ENCODE measurements at regions of chr2 and their contacts with region 1.

Region 1: GRCh38 chr2:143296089-143296488 is 166.9 kb downstream of the ARHGAP15 start:
- DNase-seq: no peak
- ATAC-seq: no peak
- H3K4me3 ChIP-seq: no peak overlapping the region
- H3K4me3 Mint-ChIP-seq: no peak overlapping the region
- H3K27ac ChIP-seq: no peak overlapping the region
- H3K27ac Mint-ChIP-seq: peak overlapping the region in 1 of 9 donors; percentile 67
- H3K4me1 ChIP-seq: no peaks in the 10 kb centered on the region
- H3K4me1 Mint-ChIP-seq: peaks cover 15 to 54% (median 45%) of the 10 kb centered on the region in 7 donors
- H3K27me3 ChIP-seq: no peaks in the 10 kb centered on the region
- H3K27me3 Mint-ChIP-seq: no peaks in the 10 kb centered on the region

Region 2: DNA sequence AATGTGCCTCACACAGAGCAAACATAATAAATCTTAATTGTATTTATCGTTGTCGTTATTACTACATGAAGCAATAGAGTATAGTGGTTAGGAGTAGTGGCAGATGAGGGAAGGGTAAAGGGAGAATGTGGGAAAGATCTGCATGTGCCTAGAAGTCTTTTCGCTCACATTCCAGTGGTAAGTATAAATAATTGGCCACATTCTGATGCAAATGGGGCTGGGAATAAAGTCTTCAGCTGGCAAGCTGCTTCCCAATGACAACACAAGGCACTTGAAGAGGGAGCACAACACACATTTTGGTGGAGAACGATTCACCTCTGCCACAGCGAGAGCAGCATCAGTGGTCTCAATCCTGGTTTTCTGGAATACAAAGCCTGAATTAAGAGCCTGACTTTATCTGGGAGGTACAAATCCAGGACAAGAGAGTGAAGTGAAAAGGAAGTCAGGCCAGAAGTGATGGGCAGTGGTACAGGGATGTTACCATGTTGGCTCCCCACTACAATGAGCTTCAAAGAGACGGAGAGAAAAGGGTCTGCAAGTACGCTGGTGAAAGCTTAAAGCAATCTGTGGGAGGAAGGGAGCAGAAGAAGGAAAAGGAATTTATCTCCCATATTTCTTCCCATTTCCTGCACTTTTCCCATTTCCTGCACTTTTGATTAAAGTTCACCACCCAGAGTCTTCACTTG is 54.5 kb before region 1 on chr2:
- CTCF ChIA-PET with region 1: no interaction called
- POLR2A ChIA-PET with region 1: no interaction called
- intact Hi-C with region 1: no loop called
- DNase-seq: no peak
- ATAC-seq: no peak
- H3K4me3 ChIP-seq: no peak overlapping the region
- H3K4me3 Mint-ChIP-seq: peak overlapping the region in 1 of 10 donors; percentile 14
- H3K27ac ChIP-seq: no peak overlapping the region
- H3K27ac Mint-ChIP-seq: peak overlapping the region; percentile 6 to 67 (median 42)
- H3K4me1 ChIP-seq: peaks cover 10 to 16% of the 10 kb centered on the region in 2 donors
- H3K4me1 Mint-ChIP-seq: peaks cover 9 to 50% (median 42%) of the 10 kb centered on the region in 7 donors
- H3K27me3 ChIP-seq: no peaks in the 10 kb centered on the region
- H3K27me3 Mint-ChIP-seq: no peaks in the 10 kb centered on the region

Region 3: DNA sequence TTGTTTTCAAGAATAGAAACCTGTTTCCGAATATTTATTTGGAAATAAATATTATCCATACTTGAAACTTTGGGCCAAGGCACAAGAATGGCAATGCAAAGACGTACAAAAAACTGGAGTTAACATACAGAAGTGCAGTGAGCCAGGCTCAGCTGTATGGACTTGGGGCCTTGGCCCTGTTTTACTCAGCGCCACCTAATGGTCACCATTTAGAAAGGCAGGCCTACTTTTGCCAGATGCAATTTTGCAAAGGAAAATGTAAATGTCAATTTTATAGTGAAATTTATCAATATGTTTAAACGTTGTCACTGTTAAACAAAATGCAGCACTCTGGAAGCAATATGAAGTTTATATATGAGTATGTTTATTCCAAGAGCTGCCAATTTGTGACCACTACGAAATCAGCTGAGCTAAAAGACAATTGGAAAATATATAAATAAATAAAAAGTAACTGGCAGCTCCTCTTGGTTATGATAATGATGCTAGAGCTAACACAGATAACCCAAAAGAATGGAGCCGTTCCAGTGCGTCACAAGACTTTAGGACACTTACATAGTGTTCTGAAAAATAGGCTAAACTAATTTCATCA is 11.9 kb before region 1 on chr2:
- CTCF ChIA-PET with region 1: no interaction called
- POLR2A ChIA-PET with region 1: no interaction called
- intact Hi-C with region 1: loop called in 1 of 2 experiments (anchors 2 kb)
- DNase-seq: peak in 6 of 9 donors; percentile 6 to 37 (median 26)
- ATAC-seq: peak; percentile 84
- H3K4me3 ChIP-seq: no peak overlapping the region
- H3K4me3 Mint-ChIP-seq: no peak overlapping the region
- H3K27ac ChIP-seq: no peak overlapping the region
- H3K27ac Mint-ChIP-seq: peak overlapping the region in 4 of 9 donors; percentile 13 to 67 (median 42)
- H3K4me1 ChIP-seq: no peaks in the 10 kb centered on the region
- H3K4me1 Mint-ChIP-seq: peaks cover 16 to 70% (median 49%) of the 10 kb centered on the region in 7 donors
- H3K27me3 ChIP-seq: no peaks in the 10 kb centered on the region
- H3K27me3 Mint-ChIP-seq: no peaks in the 10 kb centered on the region

Region 4: GRCh38 chr2:143312441-143312840 is 16.4 kb after region 1 on chr2:
- CTCF ChIA-PET with region 1: interaction called, 3 read pairs
- POLR2A ChIA-PET with region 1: no interaction called
- intact Hi-C with region 1: loop called in 1 of 2 experiments (anchors 1 kb)
- DNase-seq: no peak
- ATAC-seq: no peak
- H3K4me3 ChIP-seq: no peak overlapping the region
- H3K4me3 Mint-ChIP-seq: no peak overlapping the region
- H3K27ac ChIP-seq: no peak overlapping the region
- H3K27ac Mint-ChIP-seq: no peak overlapping the region
- H3K4me1 ChIP-seq: no peaks in the 10 kb centered on the region
- H3K4me1 Mint-ChIP-seq: peaks cover 3 to 58% (median 47%) of the 10 kb centered on the region in 7 donors
- H3K27me3 ChIP-seq: no peaks in the 10 kb centered on the region
- H3K27me3 Mint-ChIP-seq: no peaks in the 10 kb centered on the region

Region 5: DNA sequence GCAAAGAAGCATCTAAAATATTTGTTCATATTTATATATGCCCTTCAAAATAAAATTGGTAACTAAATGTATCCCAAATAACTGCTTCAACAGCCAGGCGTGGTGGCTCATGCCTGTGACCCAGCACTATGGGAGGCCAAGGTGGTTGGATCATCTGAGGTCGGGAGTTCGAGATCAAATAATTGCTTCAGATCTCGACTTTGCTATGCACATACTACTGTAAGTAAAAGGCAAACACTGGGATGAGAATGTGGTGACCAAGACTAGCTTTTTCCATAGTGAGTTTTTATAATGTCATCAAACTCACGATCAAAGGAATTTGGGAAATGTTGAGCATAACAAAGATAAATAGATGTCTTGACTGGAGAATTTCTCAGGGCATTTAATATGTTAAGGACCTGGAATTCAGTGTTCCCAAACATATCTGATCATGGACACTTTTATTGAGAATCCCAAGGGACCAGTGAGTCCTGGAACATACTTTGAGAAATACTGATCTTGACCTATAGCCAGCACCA is 38.7 kb after region 1 on chr2:
- CTCF ChIA-PET with region 1: no interaction called
- POLR2A ChIA-PET with region 1: no interaction called
- intact Hi-C with region 1: loop called in 1 of 2 experiments (anchors 5 kb)
- DNase-seq: no peak
- ATAC-seq: no peak
- H3K4me3 ChIP-seq: no peak overlapping the region
- H3K4me3 Mint-ChIP-seq: no peak overlapping the region
- H3K27ac ChIP-seq: no peak overlapping the region
- H3K27ac Mint-ChIP-seq: no peak overlapping the region
- H3K4me1 ChIP-seq: peaks cover 9 to 14% of the 10 kb centered on the region in 2 donors
- H3K4me1 Mint-ChIP-seq: peaks cover 22 to 87% (median 76%) of the 10 kb centered on the region in 7 donors
- H3K27me3 ChIP-seq: no peaks in the 10 kb centered on the region
- H3K27me3 Mint-ChIP-seq: no peaks in the 10 kb centered on the region

Measured in naive thymus-derived CD4-positive, alpha-beta T cell (primary cell).